B cell (primary cell): ENCODE measurements at regions of chr10 and their contacts with region 1.

Region 1: DNA sequence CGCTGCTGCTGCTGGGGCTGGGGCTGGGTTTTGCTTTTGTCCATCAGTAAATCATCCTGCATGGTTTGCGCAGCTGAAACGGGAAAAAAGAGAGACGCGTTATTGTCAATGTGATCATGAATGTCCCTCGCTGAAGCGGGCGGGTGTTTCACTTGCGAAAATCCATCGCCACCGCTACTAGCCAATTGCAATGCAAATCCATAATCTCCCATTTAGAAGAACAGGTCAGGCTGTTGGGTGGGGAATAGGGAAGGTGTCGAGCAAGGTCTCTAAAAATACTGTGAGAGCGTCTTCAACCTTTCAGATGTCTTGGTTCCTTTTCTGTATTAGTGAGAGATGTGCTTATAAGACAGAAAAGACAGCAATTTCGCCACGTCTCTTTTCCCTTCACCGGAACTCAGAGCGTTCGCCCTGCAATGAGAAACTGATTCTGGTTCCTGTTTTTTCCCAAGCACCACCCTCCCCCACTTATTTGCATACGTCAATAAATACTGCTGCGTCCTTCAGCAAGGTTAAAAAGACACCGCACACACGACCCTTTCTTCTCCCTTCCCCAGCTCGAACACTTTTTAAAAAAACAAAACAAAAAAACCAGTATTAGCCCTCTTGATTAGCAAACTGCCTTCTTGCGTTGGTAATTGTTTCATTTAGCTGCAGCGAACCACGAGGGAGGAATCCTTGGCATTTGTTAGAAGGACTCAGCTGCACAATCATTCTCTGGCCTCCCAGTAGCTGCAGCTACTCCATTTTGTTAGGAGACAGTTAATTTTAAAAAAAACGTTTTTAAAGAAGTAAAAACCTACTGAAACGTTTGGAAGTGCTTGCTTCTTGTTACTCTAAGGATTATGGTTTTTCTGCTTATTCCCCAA is 50.4 kb downstream of the CPEB3 start:
- DNase-seq: peak; percentile 83
- ATAC-seq: peak; percentile 72
- H3K4me3 ChIP-seq: peak overlapping the region; percentile 63 to 99 (median 91)
- H3K4me3 Mint-ChIP-seq: peak overlapping the region; percentile 96
- H3K27ac ChIP-seq: peak overlapping the region; percentile 7 to 37
- H3K27ac Mint-ChIP-seq: peak overlapping the region; percentile 93
- H3K4me1 ChIP-seq: peaks cover 19 to 30% of the 10 kb centered on the region in 2 donors
- H3K4me1 Mint-ChIP-seq: peaks cover 47% of the 10 kb centered on the region
- H3K27me3 ChIP-seq: no peaks in the 10 kb centered on the region
- H3K27me3 Mint-ChIP-seq: no peaks in the 10 kb centered on the region
- CTCF ChIP-seq: no peak

Region 2: GRCh38 chr10:92142949-92143348 is 97.6 kb before region 1 on chr10:
- CTCF ChIA-PET with region 1: no interaction called
- POLR2A ChIA-PET with region 1: no interaction called
- intact Hi-C with region 1: loop called (anchors 1 kb)
- DNase-seq: peak; percentile 61
- ATAC-seq: peak; percentile 39
- H3K4me3 ChIP-seq: peak overlapping the region; percentile 6 to 51 (median 27)
- H3K4me3 Mint-ChIP-seq: peak overlapping the region; percentile 79
- H3K27ac ChIP-seq: peak overlapping the region; percentile 52 to 61
- H3K27ac Mint-ChIP-seq: peak overlapping the region; percentile 88
- H3K4me1 ChIP-seq: peaks cover 34 to 53% of the 10 kb centered on the region in 2 donors
- H3K4me1 Mint-ChIP-seq: peaks cover 59% of the 10 kb centered on the region
- H3K27me3 ChIP-seq: no peaks in the 10 kb centered on the region
- H3K27me3 Mint-ChIP-seq: no peaks in the 10 kb centered on the region
- CTCF ChIP-seq: no peak